ENCODE measurements at regions of chr3 and their contacts with region 1.

Region 1: GRCh38 chr3:100254168-100254777 is 6.5 kb upstream of the TBC1D23 start:
- DNase-seq: peak in 6 of 10 donors; percentile 31 to 91 (median 40)

Region 2: GRCh38 chr3:99686955-99687612 is 567.2 kb before region 1 on chr3:
- intact Hi-C with region 1: no loop called
- DNase-seq: peak in 7 of 10 donors; percentile 26 to 82 (median 56)

Region 3: DNA sequence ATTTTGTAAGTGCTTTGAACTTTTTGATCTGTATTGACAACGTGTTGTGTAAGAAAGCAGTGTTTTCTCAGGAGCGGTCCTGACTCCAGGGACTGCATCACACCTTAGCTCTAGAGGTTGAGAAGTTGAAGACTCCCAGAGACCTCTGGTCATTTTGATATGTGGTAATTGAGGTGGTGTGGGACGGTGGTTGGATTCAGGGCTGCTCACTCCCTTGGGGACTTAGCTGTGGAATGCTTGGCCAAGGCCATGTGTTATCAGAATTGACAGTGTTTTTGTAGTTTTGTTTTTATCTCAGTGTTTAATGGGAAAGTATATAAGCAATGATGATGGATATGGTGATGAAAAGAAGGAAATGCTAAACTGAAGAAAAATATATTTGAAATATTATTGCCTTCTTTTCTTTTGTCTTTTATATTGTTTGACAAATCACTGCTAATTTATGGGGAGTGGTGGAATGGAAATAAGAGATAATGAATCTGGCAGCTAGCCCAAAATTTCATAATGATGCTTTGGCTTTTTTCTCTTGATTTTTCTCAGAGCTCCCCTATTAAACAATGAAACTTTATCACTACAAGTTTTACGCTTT is 420.6 kb before region 1 on chr3:
- intact Hi-C with region 1: loop called (anchors 2 kb)
- DNase-seq: no peak

Region 4: DNA sequence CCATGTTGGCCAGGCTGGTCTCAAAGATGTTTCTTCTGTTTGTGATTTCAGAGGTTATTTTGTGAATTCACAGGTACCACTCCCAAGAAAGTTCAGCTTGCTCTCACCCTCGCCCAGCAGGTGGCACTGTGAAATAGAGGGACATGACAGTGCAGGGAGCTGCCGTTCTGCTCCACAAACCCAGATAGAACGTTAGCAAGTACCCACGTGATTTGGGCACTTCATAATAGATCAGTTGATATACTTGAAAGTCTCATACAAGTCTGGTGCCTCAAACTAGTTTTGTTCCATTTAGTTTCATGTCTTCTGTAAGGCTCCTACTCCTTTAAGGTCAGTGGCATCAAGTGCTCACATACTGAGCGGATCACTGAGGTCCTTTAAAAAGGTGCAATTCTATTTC is 185.4 kb before region 1 on chr3:
- intact Hi-C with region 1: loop called (anchors 5 kb)
- DNase-seq: peak in 9 of 10 donors; percentile 41 to 95 (median 65)

Region 5: DNA sequence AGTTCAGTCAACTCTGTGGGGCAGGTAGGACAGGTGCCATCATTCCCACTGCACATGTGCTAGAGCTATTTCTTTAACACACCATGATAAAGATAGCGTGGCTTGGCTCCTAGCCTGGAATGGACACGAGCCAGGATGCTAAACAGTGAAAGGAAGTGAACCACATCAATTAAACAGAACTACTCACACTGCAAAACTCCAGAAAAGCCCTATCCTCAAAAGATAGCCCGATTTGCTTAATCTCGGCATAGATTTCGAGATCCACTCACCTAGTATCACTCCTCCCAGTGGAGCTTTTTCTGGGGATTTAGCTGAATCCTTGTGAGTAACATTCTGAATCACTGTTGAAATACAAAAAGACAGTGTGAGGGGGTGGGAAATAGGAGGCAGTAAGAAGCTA is 621.0 kb after region 1 on chr3:
- intact Hi-C with region 1: no loop called
- DNase-seq: peak in 1 of 10 donors; percentile 8